GM12878 (cell line): ENCODE measurements at regions of chr12 and their contacts with region 1.

Region 1: GRCh38 chr12:77830583-77831351 is at the start of gene NAV3:
- DNase-seq: no peak
- ATAC-seq: no peak
- H3K4me3 ChIP-seq: no peak within 1 kb of the TSS
- H3K27ac ChIP-seq: no peak within 1 kb of the TSS
- H3K4me1 ChIP-seq: no peaks in the 10 kb centered on the region
- H3K27me3 ChIP-seq: no peaks in the 10 kb centered on the region
- CTCF ChIP-seq: no peak
- EP300 ChIP-seq: no peak
- POLR2A ChIP-seq: no peak
- RAD21 ChIP-seq: no peak
- polyA plus RNA-seq, gene NAV3: 0.05 TPM in 1 of 2 experiments, not detected in the other

Region 2: GRCh38 chr12:77816196-77816595 is 14.6 kb before region 1 on chr12:
- CTCF ChIA-PET with region 1: interaction called, 11 read pairs
- POLR2A ChIA-PET with region 1: no interaction called
- RAD21 ChIA-PET with region 1: interaction called, 6 read pairs
- SMC1A ChIA-PET with region 1: interaction called, 18 read pairs
- in situ Hi-C with region 1: no loop called
- intact Hi-C with region 1: no loop called
- DNase-seq: peak; percentile 45
- ATAC-seq: peak; percentile 97
- H3K4me3 ChIP-seq: no peak overlapping the region
- H3K27ac ChIP-seq: no peak overlapping the region
- H3K4me1 ChIP-seq: peaks cover 5% of the 10 kb centered on the region; the same call in 1 of the 2 replicates
- H3K27me3 ChIP-seq: no peaks in the 10 kb centered on the region
- CTCF ChIP-seq: no peak
- EP300 ChIP-seq: peak in 1 of 2 experiments; percentile 91; a peak in 2 of 4 replicates
- POLR2A ChIP-seq: no peak
- RAD21 ChIP-seq: no peak

Region 3: GRCh38 chr12:77841467-77842054 is 10.8 kb after region 1 on chr12:
- CTCF ChIA-PET with region 1: interaction called, 3 read pairs
- POLR2A ChIA-PET with region 1: no interaction called
- RAD21 ChIA-PET with region 1: interaction called, 5 read pairs
- SMC1A ChIA-PET with region 1: interaction called, 18 read pairs
- in situ Hi-C with region 1: no loop called
- intact Hi-C with region 1: no loop called
- DNase-seq: no peak
- ATAC-seq: peak; percentile 64
- H3K4me3 ChIP-seq: no peak overlapping the region
- H3K27ac ChIP-seq: no peak overlapping the region
- H3K4me1 ChIP-seq: peaks cover 6% of the 10 kb centered on the region
- H3K27me3 ChIP-seq: no peaks in the 10 kb centered on the region
- CTCF ChIP-seq: no peak
- EP300 ChIP-seq: no peak
- POLR2A ChIP-seq: no peak
- RAD21 ChIP-seq: no peak